Tibial artery (tissue), 4 donors: ENCODE measurements at regions of chr1 and their contacts with region 1.

Region 1: GRCh38 chr1:234486498-234487448 is 7.8 kb upstream of the TARBP1 start:
- DNase-seq: no peak
- H3K4me3 ChIP-seq: no peak overlapping the region
- H3K27ac ChIP-seq: no peak overlapping the region
- H3K4me1 ChIP-seq: peaks cover 0 to 8% (median 5%) of the 10 kb centered on the region in 4 donors
- H3K27me3 ChIP-seq: peaks cover 0 to 2% of the 10 kb centered on the region in 2 donors
- CTCF ChIP-seq: peak; percentile 66 to 70

Region 2: GRCh38 chr1:235093696-235094592 is 607.2 kb after region 1 on chr1:
- intact Hi-C with region 1: loop called (anchors 5 kb)
- DNase-seq: peak; percentile 78 to 81
- H3K4me3 ChIP-seq: peak overlapping the region; percentile 8 to 9
- H3K27ac ChIP-seq: no peak overlapping the region
- H3K4me1 ChIP-seq: peaks cover 0 to 18% (median 14%) of the 10 kb centered on the region in 4 donors
- H3K27me3 ChIP-seq: peaks cover 0 to 4% of the 10 kb centered on the region in 2 donors
- CTCF ChIP-seq: peak; percentile 73 to 95